Activated B cell treated with CpG ODN at 0.5 μM for 24 hours (primary cell): ENCODE measurements at regions of chr7 and their contacts with region 1.

Region 1: DNA sequence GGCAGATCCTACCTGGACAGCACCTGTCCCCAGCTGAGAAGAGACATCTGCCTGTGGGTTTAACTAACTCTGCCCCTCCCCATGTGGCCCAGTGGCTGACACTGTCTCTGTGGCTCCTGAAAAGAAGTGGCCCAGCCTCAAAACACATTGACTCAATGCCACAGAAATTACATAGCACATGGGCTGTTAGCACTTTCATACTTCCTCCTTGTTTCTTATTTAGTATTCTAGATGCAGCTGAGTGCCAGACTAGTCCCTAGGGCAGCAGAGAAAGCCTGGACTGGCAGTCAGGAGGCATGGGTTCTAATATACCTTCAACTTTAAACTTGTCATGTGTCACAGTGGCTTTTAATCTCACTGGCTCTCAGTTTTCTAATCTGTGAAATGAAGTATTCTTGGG is 171.0 kb downstream of the TRIL start:
- DNase-seq: no peak
- ATAC-seq: peak; percentile 61
- H3K4me3 Mint-ChIP-seq: no peak overlapping the region
- H3K27ac Mint-ChIP-seq: no peak overlapping the region
- H3K4me1 Mint-ChIP-seq: peaks cover 37% of the 10 kb centered on the region
- H3K27me3 Mint-ChIP-seq: no peaks in the 10 kb centered on the region
- CTCF ChIP-seq: no peak

Region 2: DNA sequence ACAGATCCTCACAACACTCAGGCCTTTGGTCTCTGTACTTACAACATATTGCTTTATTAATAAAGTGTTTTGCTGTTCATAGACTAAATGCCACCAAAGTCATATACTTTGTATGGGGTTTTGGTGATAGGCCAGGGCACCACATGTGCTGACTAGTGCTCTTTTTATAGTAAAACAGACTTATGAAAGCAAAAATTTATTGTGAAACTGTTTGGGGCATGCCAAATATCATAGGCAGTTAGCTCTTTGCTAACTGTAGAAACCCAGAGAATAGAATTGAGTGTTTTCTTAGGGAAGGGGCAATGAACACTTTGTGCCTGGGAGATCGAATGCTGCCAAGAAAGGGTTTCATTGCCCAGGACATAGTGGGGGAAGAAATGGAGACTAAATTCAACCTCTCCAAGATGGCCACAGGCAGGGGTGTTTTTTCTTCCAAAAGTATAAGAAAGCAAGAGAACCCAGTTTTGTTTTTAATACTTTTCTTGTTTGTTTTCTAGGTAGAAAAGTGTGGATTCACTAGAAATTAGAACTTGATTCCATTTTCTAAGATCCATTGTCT is 28.3 kb after region 1 on chr7:
- CTCF ChIA-PET with region 1: no interaction called
- POLR2A ChIA-PET with region 1: no interaction called
- intact Hi-C with region 1: loop called (anchors 1 kb)
- DNase-seq: no peak
- ATAC-seq: no peak
- H3K4me3 Mint-ChIP-seq: peak overlapping the region; percentile 5
- H3K27ac Mint-ChIP-seq: peak overlapping the region; percentile 57
- H3K4me1 Mint-ChIP-seq: peaks cover 57% of the 10 kb centered on the region
- H3K27me3 Mint-ChIP-seq: no peaks in the 10 kb centered on the region
- CTCF ChIP-seq: no peak